Motor neuron (in vitro differentiated cells): ENCODE measurements at regions of chr17 and their contacts with region 1.

Region 1: DNA sequence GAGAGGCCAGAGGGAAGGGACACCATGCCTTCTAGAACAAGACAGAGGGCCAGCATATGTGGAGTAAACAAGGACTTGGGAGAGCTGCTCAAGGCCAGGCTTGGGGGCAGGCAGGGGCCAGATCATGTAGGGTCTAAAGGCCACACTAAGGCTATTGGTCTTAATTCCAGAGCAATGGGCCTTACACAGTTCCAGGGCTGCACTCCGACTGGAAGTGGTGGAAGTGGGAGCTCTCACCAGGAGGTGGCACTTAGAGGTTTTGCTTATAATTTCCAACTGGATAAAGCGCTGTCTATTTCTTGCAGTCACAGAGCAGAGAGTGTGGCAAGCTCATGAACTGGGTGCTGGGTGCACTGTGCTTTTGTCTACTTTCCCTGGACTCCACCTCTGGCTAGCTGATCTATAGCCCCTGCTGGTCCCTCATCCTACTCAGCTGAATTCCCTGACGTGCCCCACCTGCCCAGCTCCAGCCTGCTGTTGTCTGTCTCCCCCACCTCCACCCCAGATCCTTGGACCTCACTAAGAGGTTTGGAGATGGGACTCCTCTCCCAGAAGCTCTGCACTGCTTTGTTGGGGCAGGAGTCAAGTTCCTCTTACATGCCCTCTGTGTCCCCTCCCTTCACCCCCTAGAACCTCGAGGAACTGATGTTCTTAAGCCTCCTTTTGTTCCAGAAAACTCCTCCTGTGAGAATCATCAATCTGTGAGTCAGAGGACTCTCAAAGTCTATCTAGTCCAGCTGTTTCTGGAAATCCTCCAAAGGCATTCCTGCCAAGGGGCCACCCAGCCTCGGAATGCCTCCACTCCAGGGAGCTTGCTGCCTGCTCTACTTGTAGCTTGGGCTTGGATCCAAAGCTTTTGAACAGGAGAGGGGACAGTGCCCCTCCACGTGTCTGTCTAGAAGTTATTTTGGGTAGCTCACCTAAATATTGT is 48.1 kb upstream of the KSR1 start:
- ATAC-seq: peak in 5 of 8 experiments; percentile 29 to 97 (median 72)
- H3K4me3 ChIP-seq: no peak overlapping the region
- H3K27ac ChIP-seq: no peak overlapping the region
- H3K4me1 ChIP-seq: peaks cover 8 to 15% of the 10 kb centered on the region in 2 donors

Region 2: DNA sequence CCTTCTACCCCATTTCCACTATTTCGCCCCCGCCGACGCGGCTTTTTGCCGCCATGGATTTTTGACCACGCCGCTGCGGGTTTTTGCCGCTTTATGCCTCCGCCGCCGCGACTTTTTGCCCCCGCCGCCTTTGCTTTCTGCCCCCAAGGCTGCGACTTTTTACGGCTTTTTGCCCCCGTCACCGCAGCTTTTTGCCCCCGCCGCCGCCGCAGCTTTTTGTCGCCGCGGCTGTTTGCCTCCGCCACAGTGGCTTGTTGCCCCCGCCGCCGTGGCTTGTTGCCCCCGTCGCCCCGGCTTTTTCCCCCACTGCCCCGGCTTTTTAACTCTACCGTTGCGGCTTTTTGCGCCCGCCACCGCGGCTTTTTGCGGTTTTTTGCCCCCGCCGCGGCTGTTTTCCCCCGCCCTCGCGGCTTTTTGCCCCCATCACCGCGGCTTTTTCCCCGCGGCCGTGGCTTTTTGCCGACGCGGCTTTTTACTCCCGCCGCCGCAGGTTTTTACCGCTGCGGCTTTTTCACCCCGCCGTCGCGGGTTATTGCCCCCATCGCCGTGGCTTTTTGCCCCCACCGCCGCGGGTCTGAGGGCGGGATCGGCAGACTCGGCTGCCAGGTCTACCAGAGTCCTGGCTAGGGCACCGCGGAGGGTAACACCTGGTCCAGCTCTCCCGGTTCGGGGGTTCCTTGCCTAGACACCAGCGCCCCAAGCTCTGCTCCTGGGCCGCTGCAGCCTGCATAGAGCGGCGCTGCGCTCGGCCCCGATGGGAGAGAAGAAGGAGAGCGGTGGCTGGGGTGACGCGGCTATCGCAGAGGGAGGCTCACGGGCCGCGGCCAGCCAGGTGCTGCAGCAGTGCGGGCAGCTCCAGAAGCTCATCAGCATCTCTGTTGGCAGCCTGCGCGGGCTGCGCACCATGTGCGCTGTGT is 676.9 kb before region 1 on chr17:
- in situ Hi-C with region 1: no loop called
- ATAC-seq: peak in 3 of 8 experiments; percentile 59 to 71 (median 65)
- H3K4me3 ChIP-seq: no peak overlapping the region
- H3K27ac ChIP-seq: no peak overlapping the region
- H3K4me1 ChIP-seq: no peaks in the 10 kb centered on the region

Region 3: DNA sequence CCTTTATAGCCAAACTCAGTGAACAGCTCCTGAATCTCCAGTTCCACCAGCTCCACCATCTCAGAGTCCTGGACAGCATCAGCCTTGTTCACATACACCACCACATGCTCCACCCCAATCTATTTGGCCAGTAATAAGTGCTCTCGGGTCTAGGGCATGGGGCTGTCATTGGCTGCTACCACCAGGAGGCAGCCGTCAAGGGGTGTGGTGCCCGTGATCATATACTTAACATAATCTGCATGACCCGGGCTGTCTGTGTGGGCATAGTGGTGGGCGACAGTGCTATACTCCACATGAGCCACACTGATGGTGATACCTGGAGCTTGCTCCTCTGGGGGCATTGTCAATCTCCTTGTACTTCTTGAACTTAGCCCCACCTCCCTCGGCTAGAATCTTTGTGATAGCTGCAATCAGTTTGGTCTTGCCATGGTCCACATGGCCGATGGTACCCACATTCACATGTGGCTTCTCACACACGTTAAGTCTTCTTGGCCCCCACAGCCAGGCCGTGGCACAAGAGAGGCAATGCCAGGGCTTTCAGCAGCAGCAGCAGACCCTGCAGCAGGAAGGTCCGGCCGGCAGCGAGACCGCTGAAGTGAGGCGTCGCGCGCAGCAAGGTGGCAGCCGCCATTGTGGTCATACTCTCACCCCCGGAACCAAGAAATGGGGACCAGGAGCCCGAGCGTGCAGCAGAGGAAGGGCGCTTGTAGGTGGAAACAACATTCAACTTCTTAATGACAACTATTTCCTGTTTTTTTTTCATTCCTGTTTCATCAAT is 324.6 kb before region 1 on chr17:
- in situ Hi-C with region 1: no loop called
- ATAC-seq: no peak
- H3K4me3 ChIP-seq: no peak overlapping the region
- H3K27ac ChIP-seq: no peak overlapping the region
- H3K4me1 ChIP-seq: no peaks in the 10 kb centered on the region

Region 4: GRCh38 chr17:27323524-27324206 is 84.5 kb before region 1 on chr17:
- in situ Hi-C with region 1: loop called in 1 of 9 experiments (anchors 25 kb)
- ATAC-seq: peak; percentile 49 to 93 (median 68)
- H3K4me3 ChIP-seq: no peak overlapping the region
- H3K27ac ChIP-seq: no peak overlapping the region
- H3K4me1 ChIP-seq: peaks cover 0 to 4% of the 10 kb centered on the region in 2 donors

Region 5: GRCh38 chr17:27506348-27507231 is 98.4 kb after region 1 on chr17:
- in situ Hi-C with region 1: loop called in 1 of 9 experiments (anchors 25 kb)
- ATAC-seq: peak in 1 of 8 experiments; percentile 10
- H3K4me3 ChIP-seq: no peak overlapping the region
- H3K27ac ChIP-seq: no peak overlapping the region
- H3K4me1 ChIP-seq: peaks cover 0 to 15% of the 10 kb centered on the region in 2 donors

Region 6: GRCh38 chr17:27760069-27760885 is 352.1 kb after region 1 on chr17:
- in situ Hi-C with region 1: no loop called
- ATAC-seq: peak in 4 of 8 experiments; percentile 23 to 73 (median 62)
- H3K4me3 ChIP-seq: no peak overlapping the region
- H3K27ac ChIP-seq: no peak overlapping the region
- H3K4me1 ChIP-seq: no peaks in the 10 kb centered on the region